ENCODE measurements at regions of chr1 and their contacts with region 1.

Region 1: GRCh38 chr1:110338886-110339406 is at the start of gene RBM15:
- DNase-seq: peak; percentile 96 to 99 (median 98)
- ATAC-seq: peak; percentile 79
- H3K4me3 ChIP-seq: peak within 1 kb of the TSS; percentile 88
- H3K4me1 ChIP-seq: peaks cover 30% of the 10 kb centered on the region
- CTCF ChIP-seq: no peak
- total RNA-seq, gene RBM15: 24.1 to 29.0 (median 26.7) TPM

Region 2: DNA sequence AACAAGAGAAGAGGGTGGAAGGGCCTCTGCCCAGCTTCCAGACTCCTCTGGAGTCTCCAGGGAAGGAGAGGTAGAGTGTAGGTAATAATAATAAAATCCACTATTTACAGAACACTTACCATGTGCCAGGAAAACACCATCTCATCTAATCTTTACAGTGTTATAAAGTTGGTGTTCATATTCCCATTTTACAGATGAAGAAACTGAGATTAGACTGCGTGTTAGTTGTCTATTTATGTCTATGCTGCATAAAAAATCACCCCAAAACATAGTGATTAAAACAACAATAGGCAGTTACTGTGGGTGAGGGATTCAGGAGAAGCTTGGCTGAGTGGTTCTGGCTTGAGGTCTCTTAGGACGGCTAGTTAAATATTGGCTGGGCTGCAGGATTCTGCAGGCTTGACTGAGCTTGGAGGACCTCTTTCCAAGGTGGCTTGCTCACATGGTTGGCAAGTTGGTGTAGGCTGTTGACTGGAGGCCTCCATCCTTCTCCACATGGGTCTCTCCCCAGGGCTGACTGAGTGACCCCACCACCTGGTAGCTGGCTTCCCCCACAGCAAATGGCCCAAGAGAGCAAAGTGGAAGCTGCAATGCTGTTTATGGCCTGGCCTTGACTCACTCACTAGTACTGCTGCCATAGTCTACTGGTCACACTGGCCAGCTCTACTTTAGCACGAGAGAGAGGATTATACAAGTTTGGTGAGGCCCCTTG is 262.0 kb before region 1 on chr1:
- intact Hi-C with region 1: no loop called
- DNase-seq: no peak
- ATAC-seq: no peak
- H3K4me3 ChIP-seq: no peak overlapping the region
- H3K4me1 ChIP-seq: no peaks in the 10 kb centered on the region
- CTCF ChIP-seq: no peak

Region 3: GRCh38 chr1:110407260-110408210 is 68.6 kb after region 1 on chr1 and contains the start of gene LAMTOR5:
- intact Hi-C with region 1: loop called in 1 of 2 experiments (anchors 5 kb)
- DNase-seq: peak; percentile 95 to 96 (median 96)
- ATAC-seq: peak; percentile 99
- H3K4me3 ChIP-seq: peak within 1 kb of the TSS; percentile 94
- H3K4me1 ChIP-seq: peaks cover 19% of the 10 kb centered on the region
- CTCF ChIP-seq: no peak
- total RNA-seq, gene LAMTOR5: 95.3 to 114 (median 108) TPM

Region 4: DNA sequence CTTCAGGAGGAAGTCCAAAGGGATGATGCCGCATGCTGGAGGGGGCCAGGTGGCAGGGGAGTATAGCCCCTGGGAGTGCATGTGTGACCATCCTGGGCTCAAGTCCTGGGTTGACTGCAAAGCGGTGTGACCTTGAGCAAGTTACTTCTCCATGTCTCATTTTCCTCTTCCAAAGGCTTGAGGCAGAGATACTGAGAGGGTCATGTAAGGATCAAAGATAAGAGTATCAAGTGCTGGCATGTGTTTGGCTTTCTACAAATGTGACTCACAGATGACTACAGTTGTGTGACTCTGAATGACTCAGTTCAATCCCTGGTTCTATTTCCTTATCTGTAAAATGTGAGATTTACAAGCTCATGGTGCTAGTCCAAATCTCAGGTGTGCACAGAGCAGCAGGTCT is 138.1 kb after region 1 on chr1:
- intact Hi-C with region 1: no loop called
- DNase-seq: no peak
- ATAC-seq: peak; percentile 86
- H3K4me3 ChIP-seq: no peak overlapping the region
- H3K4me1 ChIP-seq: no peaks in the 10 kb centered on the region
- CTCF ChIP-seq: no peak

Region 5: GRCh38 chr1:110495926-110496600 is 157.1 kb after region 1 on chr1:
- intact Hi-C with region 1: no loop called
- DNase-seq: peak in 2 of 3 donors; percentile 69 to 94
- ATAC-seq: peak; percentile 88
- H3K4me3 ChIP-seq: no peak overlapping the region
- H3K4me1 ChIP-seq: no peaks in the 10 kb centered on the region
- CTCF ChIP-seq: peak; percentile 70